Activated naive CD4-positive, alpha-beta T cell treated with anti-CD3 and anti-CD28 coated beads for 36 hours (primary cell): ENCODE measurements at regions of chr15 and their contacts with region 1.

Region 1: GRCh38 chr15:81265944-81266775 is 57.8 kb downstream of the STARD5 start:
- DNase-seq: peak; percentile 93
- H3K4me3 Mint-ChIP-seq: peak overlapping the region; percentile 65
- H3K27ac Mint-ChIP-seq: no peak overlapping the region
- H3K4me1 Mint-ChIP-seq: peaks cover 29% of the 10 kb centered on the region
- H3K27me3 Mint-ChIP-seq: no peaks in the 10 kb centered on the region

Region 2: GRCh38 chr15:80989518-80990478 is 276.4 kb before region 1 on chr15 and contains the start of gene MESD:
- CTCF ChIA-PET with region 1: interaction called, 17 read pairs
- intact Hi-C with region 1: no loop called
- DNase-seq: peak; percentile 99
- H3K4me3 Mint-ChIP-seq: peak within 1 kb of the TSS; percentile 99
- H3K27ac Mint-ChIP-seq: peak within 1 kb of the TSS; percentile 97
- H3K4me1 Mint-ChIP-seq: peaks cover 57% of the 10 kb centered on the region
- H3K27me3 Mint-ChIP-seq: no peaks in the 10 kb centered on the region
- total RNA-seq, gene MESD: 12.5 to 15.1 TPM

Region 3: DNA sequence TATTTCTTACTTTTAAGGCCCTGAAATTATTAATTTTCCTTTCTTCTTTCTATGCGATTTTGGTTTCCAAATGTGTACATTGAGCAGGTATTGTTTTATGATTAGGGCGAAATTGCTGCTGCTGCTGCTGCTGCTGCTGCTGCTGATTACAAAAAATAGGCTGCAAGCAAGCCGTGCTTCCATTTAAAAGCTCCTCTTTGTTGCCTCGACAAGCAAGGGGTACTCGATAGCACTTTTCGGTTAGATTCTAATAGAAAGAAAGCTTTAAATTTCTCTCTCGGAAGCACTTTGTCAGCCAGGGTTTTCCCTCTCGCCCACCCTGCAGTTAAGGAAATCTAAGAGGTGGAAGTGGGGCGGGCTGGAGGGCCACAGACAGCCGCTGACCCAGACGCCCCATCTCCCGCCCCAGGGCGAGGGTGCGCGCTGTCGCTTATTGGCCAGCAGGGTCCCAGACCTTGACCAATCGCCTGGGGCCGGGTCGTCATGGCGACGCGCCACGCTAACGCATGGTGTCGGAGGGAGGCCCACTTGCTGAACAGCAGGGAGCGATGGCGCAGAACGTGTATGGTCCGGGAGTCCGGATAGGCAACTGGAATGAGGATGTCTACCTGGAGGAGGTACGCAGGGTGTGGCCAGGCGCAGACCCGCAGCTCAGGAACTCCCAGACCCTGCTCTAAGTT is 132.2 kb before region 1 on chr15 and contains the start of gene CFAP161:
- CTCF ChIA-PET with region 1: interaction called, 10 read pairs
- intact Hi-C with region 1: no loop called
- DNase-seq: peak; percentile 45
- H3K4me3 Mint-ChIP-seq: peak within 1 kb of the TSS; percentile 32
- H3K27ac Mint-ChIP-seq: no peak within 1 kb of the TSS
- H3K4me1 Mint-ChIP-seq: peaks cover 8% of the 10 kb centered on the region
- H3K27me3 Mint-ChIP-seq: peaks cover 51% of the 10 kb centered on the region
- total RNA-seq, gene CFAP161: not detected

Region 4: DNA sequence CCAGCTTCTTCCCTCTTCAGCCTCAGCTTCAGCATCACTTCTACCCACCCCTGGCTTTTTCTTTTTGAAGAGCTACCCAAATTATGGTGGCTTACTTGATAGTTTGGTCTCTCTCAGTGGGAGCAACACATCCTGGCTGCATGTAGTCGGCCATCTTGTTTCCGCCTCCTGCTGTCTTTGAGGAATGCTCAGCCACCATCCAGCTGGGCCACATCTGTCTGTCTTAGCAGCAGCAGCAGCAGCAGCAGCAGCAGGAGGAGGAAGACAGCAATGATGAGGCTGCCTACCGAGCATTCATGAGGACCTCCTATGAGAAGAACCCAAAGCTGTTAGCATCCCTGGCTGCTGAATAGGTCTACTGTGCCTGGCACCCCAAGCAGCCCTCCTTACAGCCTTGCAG is 49.7 kb before region 1 on chr15:
- CTCF ChIA-PET with region 1: interaction called, 16 read pairs
- intact Hi-C with region 1: no loop called
- DNase-seq: no peak
- H3K4me3 Mint-ChIP-seq: no peak overlapping the region
- H3K27ac Mint-ChIP-seq: no peak overlapping the region
- H3K4me1 Mint-ChIP-seq: no peaks in the 10 kb centered on the region
- H3K27me3 Mint-ChIP-seq: peaks cover 3% of the 10 kb centered on the region

Region 5: GRCh38 chr15:81296673-81297072 is 30.5 kb after region 1 on chr15:
- CTCF ChIA-PET with region 1: interaction called, 49 read pairs
- intact Hi-C with region 1: no loop called
- DNase-seq: peak; percentile 90
- H3K4me3 Mint-ChIP-seq: peak overlapping the region; percentile 93
- H3K27ac Mint-ChIP-seq: peak overlapping the region; percentile 99
- H3K4me1 Mint-ChIP-seq: peaks cover 66% of the 10 kb centered on the region
- H3K27me3 Mint-ChIP-seq: no peaks in the 10 kb centered on the region

Region 6: DNA sequence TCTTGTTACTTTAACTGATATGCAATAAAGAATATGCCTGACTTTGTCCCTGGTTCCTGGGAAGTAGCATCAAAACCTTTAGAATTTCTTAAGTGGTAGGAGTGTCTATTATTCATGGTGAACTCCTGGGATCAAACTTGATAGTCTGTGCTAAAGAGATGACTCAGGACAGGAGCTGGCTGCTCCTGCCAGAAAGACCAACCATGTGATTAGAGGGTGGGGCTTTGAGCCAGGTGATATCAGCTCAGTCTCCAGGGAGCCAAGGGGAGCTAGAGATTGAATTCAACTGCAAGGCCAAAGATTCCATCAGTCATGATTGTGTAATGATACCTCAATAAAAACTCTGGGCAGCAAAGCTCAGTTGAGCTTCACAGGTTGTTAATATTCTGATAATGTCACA is 128.4 kb after region 1 on chr15:
- CTCF ChIA-PET with region 1: interaction called, 98 read pairs
- intact Hi-C with region 1: no loop called
- DNase-seq: no peak
- H3K4me3 Mint-ChIP-seq: no peak overlapping the region
- H3K27ac Mint-ChIP-seq: no peak overlapping the region
- H3K4me1 Mint-ChIP-seq: no peaks in the 10 kb centered on the region
- H3K27me3 Mint-ChIP-seq: no peaks in the 10 kb centered on the region

Region 7: DNA sequence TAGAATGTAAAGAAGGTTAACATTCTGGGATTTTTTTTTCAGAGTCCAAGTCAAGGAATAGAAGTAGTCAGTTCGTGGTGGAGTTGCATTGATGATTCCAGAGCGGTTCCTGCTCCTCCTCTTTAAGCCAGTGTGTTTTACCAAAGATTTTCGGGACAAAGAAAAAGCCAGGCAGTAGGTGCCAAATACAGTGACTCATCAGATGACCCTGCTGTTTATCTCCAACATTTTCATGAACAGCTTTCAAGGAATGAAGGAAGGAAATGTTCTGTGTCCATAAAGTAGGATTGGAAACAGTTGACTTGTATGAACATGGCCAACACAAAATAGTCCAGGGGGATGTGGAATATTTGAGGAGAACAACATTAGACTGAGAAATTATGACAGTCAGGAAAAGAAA is 250.3 kb after region 1 on chr15:
- CTCF ChIA-PET with region 1: no interaction called
- intact Hi-C with region 1: no loop called
- DNase-seq: no peak
- H3K4me3 Mint-ChIP-seq: no peak overlapping the region
- H3K27ac Mint-ChIP-seq: no peak overlapping the region
- H3K4me1 Mint-ChIP-seq: no peaks in the 10 kb centered on the region
- H3K27me3 Mint-ChIP-seq: peaks cover 10% of the 10 kb centered on the region